Sigmoid colon (tissue), 7 donors: ENCODE measurements at regions of chr12 and their contacts with region 1.

Region 1: DNA sequence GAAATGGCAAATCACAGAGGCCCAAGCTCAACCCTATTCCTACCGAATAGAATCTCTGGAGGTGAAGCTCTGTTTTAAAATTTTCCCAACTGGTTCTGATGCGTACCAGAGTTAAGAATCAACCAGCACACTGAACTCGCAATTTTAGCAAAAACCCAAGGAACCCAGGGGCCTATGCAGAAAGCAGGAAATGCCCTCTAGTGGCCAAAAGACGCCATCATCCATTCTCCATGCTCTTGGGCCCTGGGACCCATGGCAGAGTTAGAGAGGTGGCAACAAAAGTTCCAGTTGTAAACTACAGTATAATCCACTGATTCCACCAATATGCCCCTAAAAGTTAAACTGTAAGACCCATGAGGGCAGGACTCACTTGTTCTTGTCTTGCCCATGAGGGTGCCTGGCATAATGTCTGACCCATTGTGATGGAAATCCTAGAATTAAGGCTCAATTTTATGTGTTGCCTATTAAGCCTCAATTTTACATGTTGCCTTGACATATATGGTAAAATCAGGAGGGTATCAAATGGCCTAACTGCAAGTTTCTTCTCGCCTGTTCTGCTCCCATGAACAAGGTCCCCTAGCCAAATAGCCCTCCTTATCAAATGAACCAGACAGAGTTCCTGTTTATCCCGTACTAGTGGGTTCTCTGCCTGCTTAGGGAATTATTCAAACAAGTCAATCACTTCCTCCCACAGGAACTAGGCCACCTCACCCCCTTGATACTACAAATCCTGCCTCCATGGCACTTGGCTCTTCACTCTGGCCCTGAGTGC is 137.5 kb upstream of the CPM start:
- DNase-seq: peak; percentile 71
- H3K4me3 ChIP-seq: no peak overlapping the region
- H3K27ac ChIP-seq: no peak overlapping the region
- H3K4me1 ChIP-seq: no peaks in the 10 kb centered on the region
- H3K27me3 ChIP-seq: no peaks in the 10 kb centered on the region
- CTCF ChIP-seq: peak; percentile 27 to 87 (median 73)
- EP300 ChIP-seq: no peak
- POLR2A ChIP-seq: no peak

Region 2: GRCh38 chr12:68831272-68831671 is 239.2 kb before region 1 on chr12:
- intact Hi-C with region 1: loop called (anchors 10 kb)
- DNase-seq: no peak
- H3K4me3 ChIP-seq: no peak overlapping the region
- H3K27ac ChIP-seq: no peak overlapping the region
- H3K4me1 ChIP-seq: no peaks in the 10 kb centered on the region
- H3K27me3 ChIP-seq: no peaks in the 10 kb centered on the region
- CTCF ChIP-seq: no peak
- EP300 ChIP-seq: no peak
- POLR2A ChIP-seq: no peak

Region 3: GRCh38 chr12:68865399-68866164 is 204.9 kb before region 1 on chr12:
- intact Hi-C with region 1: loop called (anchors 2 kb)
- DNase-seq: no peak
- H3K4me3 ChIP-seq: no peak overlapping the region
- H3K27ac ChIP-seq: no peak overlapping the region
- H3K4me1 ChIP-seq: peaks cover 0 to 3% (median 0%) of the 10 kb centered on the region in 4 donors
- H3K27me3 ChIP-seq: no peaks in the 10 kb centered on the region
- CTCF ChIP-seq: no peak
- EP300 ChIP-seq: no peak
- POLR2A ChIP-seq: no peak

Region 4: GRCh38 chr12:69007101-69007854 is 63.2 kb before region 1 on chr12:
- intact Hi-C with region 1: no loop called
- DNase-seq: no peak
- H3K4me3 ChIP-seq: peak overlapping the region in 2 of 4 donors; percentile 6 to 14
- H3K27ac ChIP-seq: peak overlapping the region; percentile 36 to 74 (median 51)
- H3K4me1 ChIP-seq: peaks cover 0 to 24% (median 23%) of the 10 kb centered on the region in 4 donors
- H3K27me3 ChIP-seq: no peaks in the 10 kb centered on the region
- CTCF ChIP-seq: no peak
- EP300 ChIP-seq: no peak
- POLR2A ChIP-seq: no peak